T-cell (primary cell): ENCODE measurements at regions of chr5 and their contacts with region 1.

Region 1: GRCh38 chr5:179033004-179033580 is 9.5 kb downstream of the ZNF879 start:
- DNase-seq: no peak
- ATAC-seq: no peak
- H3K4me3 ChIP-seq: no peak overlapping the region
- H3K4me3 Mint-ChIP-seq: no peak overlapping the region
- H3K27ac ChIP-seq: no peak overlapping the region
- H3K27ac Mint-ChIP-seq: no peak overlapping the region
- H3K4me1 ChIP-seq: no peaks in the 10 kb centered on the region
- H3K4me1 Mint-ChIP-seq: peaks cover 0 to 2% (median 0%) of the 10 kb centered on the region in 3 donors
- H3K27me3 ChIP-seq: no peaks in the 10 kb centered on the region
- H3K27me3 Mint-ChIP-seq: no peaks in the 10 kb centered on the region

Region 2: DNA sequence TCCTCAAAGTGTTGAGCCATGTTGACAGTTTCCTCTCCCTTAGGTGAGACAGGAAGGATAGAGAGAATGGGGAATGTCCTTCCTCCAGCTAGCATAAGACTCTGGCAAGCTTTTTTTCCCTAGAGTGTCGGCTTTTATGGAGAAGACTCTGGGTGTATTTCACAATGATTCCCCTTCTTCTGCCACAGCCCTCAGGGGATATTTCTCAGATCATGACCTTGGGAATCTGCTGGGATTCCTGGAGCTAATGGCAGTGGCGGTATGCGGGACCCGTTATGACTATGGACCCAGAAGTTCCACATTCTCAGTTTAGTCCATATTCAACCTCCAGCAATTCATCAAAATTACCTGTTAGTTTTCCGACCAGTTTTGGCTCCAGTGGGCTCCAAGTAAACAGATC is 326.5 kb before region 1 on chr5:
- CTCF ChIA-PET with region 1: no interaction called
- POLR2A ChIA-PET with region 1: interaction called in 1 of 2 experiments, 10 read pairs
- DNase-seq: no peak
- ATAC-seq: no peak
- H3K4me3 ChIP-seq: no peak overlapping the region
- H3K4me3 Mint-ChIP-seq: no peak overlapping the region
- H3K27ac ChIP-seq: no peak overlapping the region
- H3K27ac Mint-ChIP-seq: no peak overlapping the region
- H3K4me1 ChIP-seq: no peaks in the 10 kb centered on the region
- H3K4me1 Mint-ChIP-seq: no peaks in the 10 kb centered on the region
- H3K27me3 ChIP-seq: peaks cover 0 to 6% of the 10 kb centered on the region in 2 experiments
- H3K27me3 Mint-ChIP-seq: no peaks in the 10 kb centered on the region

Region 3: GRCh38 chr5:179060116-179061008 is 27.3 kb after region 1 on chr5 and contains the start of gene ZNF354C:
- CTCF ChIA-PET with region 1: no interaction called
- POLR2A ChIA-PET with region 1: no interaction called
- DNase-seq: peak; percentile 70 to 90 (median 81)
- ATAC-seq: peak; percentile 98 to 99 (median 98)
- H3K4me3 ChIP-seq: peak within 1 kb of the TSS; percentile 61 to 74
- H3K4me3 Mint-ChIP-seq: peak within 1 kb of the TSS; percentile 85 to 96 (median 95)
- H3K27ac ChIP-seq: peak within 1 kb of the TSS; percentile 57
- H3K27ac Mint-ChIP-seq: peak within 1 kb of the TSS; percentile 92 to 94
- H3K4me1 ChIP-seq: peaks cover 10 to 12% of the 10 kb centered on the region in 2 experiments
- H3K4me1 Mint-ChIP-seq: peaks cover 27 to 33% (median 29%) of the 10 kb centered on the region in 3 donors
- H3K27me3 ChIP-seq: no peaks in the 10 kb centered on the region
- H3K27me3 Mint-ChIP-seq: peaks cover 7 to 9% of the 10 kb centered on the region in 2 donors
- total RNA-seq, gene ZNF354C: 5.3 to 9.3 (median 8.1) TPM

Region 4: GRCh38 chr5:179840766-179841165 is 807.7 kb after region 1 on chr5:
- CTCF ChIA-PET with region 1: no interaction called
- POLR2A ChIA-PET with region 1: no interaction called
- DNase-seq: no peak
- ATAC-seq: no peak
- H3K4me3 ChIP-seq: no peak overlapping the region
- H3K4me3 Mint-ChIP-seq: no peak overlapping the region
- H3K27ac ChIP-seq: no peak overlapping the region
- H3K27ac Mint-ChIP-seq: no peak overlapping the region
- H3K4me1 ChIP-seq: peaks cover 0 to 21% of the 10 kb centered on the region in 2 experiments
- H3K4me1 Mint-ChIP-seq: peaks cover 15 to 22% (median 19%) of the 10 kb centered on the region in 3 donors
- H3K27me3 ChIP-seq: no peaks in the 10 kb centered on the region
- H3K27me3 Mint-ChIP-seq: no peaks in the 10 kb centered on the region